ENCODE measurements at regions of chr12 and their contacts with region 1.

Region 1: GRCh38 chr12:4366090-4366489 is 13.4 kb downstream of the FGF23 start:
- DNase-seq: no peak
- H3K4me3 ChIP-seq: no peak overlapping the region
- H3K27ac ChIP-seq: no peak overlapping the region
- H3K4me1 ChIP-seq: no peaks in the 10 kb centered on the region
- H3K27me3 ChIP-seq: peaks cover 85% of the 10 kb centered on the region
- CTCF ChIP-seq: no peak

Region 2: GRCh38 chr12:3872800-3873636 is 493.1 kb before region 1 on chr12 and contains the start of gene PARP11:
- CTCF ChIA-PET with region 1: no interaction called
- POLR2A ChIA-PET with region 1: no interaction called
- intact Hi-C with region 1: no loop called
- DNase-seq: no peak
- H3K4me3 ChIP-seq: no peak within 1 kb of the TSS
- H3K27ac ChIP-seq: no peak within 1 kb of the TSS
- H3K4me1 ChIP-seq: no peaks in the 10 kb centered on the region
- H3K27me3 ChIP-seq: peaks cover 27% of the 10 kb centered on the region; the same call in 1 of the 2 replicates
- CTCF ChIP-seq: no peak
- total RNA-seq, gene PARP11: not detected in 2 replicates

Region 3: DNA sequence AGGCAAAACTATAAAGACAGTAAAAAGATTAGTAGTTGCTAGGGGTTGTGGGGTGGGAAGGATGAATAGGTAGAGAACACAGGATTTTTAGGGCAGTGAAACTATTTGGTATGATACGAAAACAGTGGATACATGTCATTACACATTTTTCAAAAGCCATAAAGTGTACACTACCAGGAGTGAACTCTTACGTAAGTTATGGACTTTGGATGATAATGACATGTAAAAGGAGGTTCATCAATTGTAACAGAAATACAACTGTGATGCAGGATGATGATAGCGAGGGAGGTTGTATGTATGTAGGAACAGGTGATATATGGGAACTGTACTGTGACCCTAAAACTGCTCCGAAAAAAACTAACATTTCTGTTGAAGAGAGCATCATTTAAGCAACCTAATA is 94.7 kb after region 1 on chr12:
- CTCF ChIA-PET with region 1: no interaction called
- POLR2A ChIA-PET with region 1: no interaction called
- intact Hi-C with region 1: no loop called
- DNase-seq: peak in 1 of 2 experiments; percentile 28
- H3K4me3 ChIP-seq: no peak overlapping the region
- H3K27ac ChIP-seq: no peak overlapping the region
- H3K4me1 ChIP-seq: no peaks in the 10 kb centered on the region
- H3K27me3 ChIP-seq: peaks cover 81% of the 10 kb centered on the region
- CTCF ChIP-seq: no peak

Region 4: GRCh38 chr12:4849115-4849541 is 483.0 kb after region 1 on chr12:
- CTCF ChIA-PET with region 1: interaction called, 10 read pairs
- POLR2A ChIA-PET with region 1: no interaction called
- intact Hi-C with region 1: no loop called
- DNase-seq: peak; percentile 17 to 34
- H3K4me3 ChIP-seq: no peak overlapping the region
- H3K27ac ChIP-seq: no peak overlapping the region
- H3K4me1 ChIP-seq: no peaks in the 10 kb centered on the region
- H3K27me3 ChIP-seq: peaks cover 51% of the 10 kb centered on the region
- CTCF ChIP-seq: peak; percentile 87